Prostate gland (tissue), 2 donors: ENCODE measurements at regions of chr2 and their contacts with region 1.

Region 1: DNA sequence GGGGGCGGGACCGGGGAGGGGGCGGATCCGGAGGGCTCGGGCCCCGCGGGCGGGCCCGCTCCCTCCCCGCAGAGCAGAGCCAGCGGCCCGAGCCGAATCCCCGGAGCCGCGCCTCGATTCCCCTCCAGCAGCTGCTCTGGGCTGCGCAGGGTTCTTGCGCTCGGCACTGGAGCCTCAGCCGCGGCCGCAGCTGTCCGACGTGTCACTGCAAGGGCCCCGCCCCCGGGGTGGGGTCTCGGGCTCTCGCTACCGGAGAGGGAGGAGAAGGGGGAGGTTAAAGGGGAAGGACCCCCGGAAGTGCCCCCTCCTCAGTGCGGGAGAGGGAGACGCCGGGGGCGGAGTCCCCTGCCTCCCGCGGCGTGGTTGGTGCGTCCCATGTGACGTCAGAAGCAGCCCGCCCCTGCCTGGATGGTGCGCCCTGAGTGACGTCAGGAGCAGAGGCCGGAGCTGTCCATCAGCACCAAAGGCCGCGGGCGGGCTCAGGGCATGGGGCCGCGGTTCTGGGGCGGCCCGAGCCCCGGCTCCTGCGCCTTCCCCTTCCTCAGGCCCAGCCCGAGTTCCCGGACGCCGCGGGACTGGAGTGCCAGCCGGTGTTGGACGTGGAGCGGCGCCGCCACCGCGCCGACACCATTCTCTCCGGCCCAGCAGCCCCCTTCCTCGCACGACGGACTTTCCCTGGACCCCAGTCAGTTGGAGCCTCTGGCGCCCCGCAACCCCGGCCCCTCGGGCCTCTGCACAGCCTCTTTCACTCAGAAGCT is at the starts of genes CHPF and TMEM198:
- DNase-seq: peak; percentile 99
- H3K4me3 ChIP-seq: peak within 1 kb of the TSS; percentile 62 to 79
- H3K27ac ChIP-seq: peak within 1 kb of the TSS; percentile 93 to 94
- H3K4me1 ChIP-seq: peaks cover 11% of the 10 kb centered on the region
- H3K27me3 ChIP-seq: no peaks in the 10 kb centered on the region
- CTCF ChIP-seq: peak in 2 of 4 experiments; percentile 4 to 20
- POLR2A ChIP-seq: peak; percentile 73
- total RNA-seq, gene CHPF: 150 to 819 TPM
- total RNA-seq, gene TMEM198: 5.7 to 11.5 TPM

Region 2: DNA sequence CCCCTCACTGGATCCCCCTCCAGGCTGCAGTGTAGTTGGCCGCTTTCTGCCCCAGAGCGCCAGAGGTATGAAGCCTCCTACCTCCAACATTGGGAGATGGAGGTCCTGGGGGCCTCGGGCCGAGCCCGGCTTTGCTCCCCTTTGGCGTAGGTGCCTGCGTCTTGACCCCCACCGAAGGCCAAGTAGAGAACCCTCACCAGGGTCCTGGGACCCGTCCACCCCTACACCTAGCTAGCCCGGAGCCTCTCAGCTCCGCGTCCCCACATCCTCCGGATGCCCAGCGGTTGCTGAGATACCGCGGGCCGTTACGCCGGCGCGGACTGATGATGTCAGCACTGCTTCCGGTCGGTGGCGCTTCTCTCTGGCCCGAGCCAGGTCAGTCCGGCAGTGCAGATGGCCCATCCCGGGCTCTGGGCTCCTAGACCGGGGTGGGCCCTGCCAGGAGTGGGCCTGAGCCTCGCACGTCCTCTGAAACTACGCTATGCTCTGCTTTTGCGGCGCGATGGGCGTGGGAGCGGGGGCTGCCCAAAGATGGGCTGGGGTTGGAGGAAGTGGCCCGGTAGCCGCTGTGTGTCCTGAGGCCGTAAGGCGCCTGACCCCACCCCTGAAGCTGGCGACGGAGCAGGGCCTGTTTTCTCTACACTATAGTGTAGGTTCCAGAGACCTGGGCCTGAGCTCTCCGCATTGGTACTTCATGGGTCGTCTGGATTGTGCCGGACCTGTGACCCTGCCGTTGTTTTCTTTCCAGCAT is 298.5 kb before region 1 on chr2 and contains the starts of genes GLB1L and STK16:
- intact Hi-C with region 1: no loop called
- DNase-seq: peak; percentile 88
- H3K4me3 ChIP-seq: peak within 1 kb of the TSS; percentile 74 to 77
- H3K27ac ChIP-seq: peak within 1 kb of the TSS; percentile 90 to 94
- H3K4me1 ChIP-seq: peaks cover 20% of the 10 kb centered on the region
- H3K27me3 ChIP-seq: no peaks in the 10 kb centered on the region
- CTCF ChIP-seq: peak in 2 of 4 experiments; percentile 10 to 33
- POLR2A ChIP-seq: peak; percentile 78
- total RNA-seq, gene GLB1L: 23.1 to 25.0 TPM
- total RNA-seq, gene STK16: 20.5 to 26.1 TPM

Region 3: DNA sequence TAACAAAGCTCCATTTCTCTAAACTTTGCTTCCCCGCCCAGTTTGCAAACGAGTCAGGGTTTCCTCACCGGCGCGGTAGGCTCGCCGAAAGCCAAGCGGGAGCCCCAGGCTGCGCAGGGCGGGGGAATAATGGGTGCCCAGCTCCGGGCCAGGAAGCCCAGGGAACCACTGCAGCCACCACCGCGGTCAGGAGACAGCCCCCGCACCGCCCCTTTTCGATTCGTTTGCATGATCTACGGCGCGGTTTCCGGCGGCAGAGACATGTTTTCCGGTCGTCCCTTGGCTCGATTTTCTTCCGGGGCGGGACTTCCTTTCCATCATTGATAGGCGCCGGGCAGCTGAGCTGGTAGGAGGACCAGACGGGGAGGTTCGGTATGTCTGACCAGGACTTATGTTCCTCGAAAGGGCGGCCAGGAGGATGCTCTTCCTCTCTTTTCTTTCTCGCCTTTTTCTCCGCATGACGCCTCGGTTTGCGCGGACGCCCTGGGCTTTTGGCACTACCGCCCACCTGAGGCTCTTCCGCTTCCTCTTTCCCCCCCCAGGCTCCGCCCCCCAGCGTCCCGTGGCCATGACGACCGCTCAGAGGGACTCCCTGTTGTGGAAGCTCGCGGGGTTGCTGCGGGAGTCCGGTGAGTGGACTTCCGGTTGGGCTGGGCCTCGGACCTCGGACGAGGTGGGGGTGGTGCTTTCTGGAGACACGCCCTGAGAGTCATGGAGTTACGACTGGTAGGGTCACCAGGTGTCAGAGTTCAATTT is 54.0 kb after region 1 on chr2 and contains the start of gene STK11IP:
- intact Hi-C with region 1: loop called (anchors 5 kb)
- DNase-seq: peak; percentile 96
- H3K4me3 ChIP-seq: peak within 1 kb of the TSS; percentile 50 to 66
- H3K27ac ChIP-seq: peak within 1 kb of the TSS; percentile 82 to 90
- H3K4me1 ChIP-seq: no peaks in the 10 kb centered on the region
- H3K27me3 ChIP-seq: no peaks in the 10 kb centered on the region
- CTCF ChIP-seq: peak in 1 of 4 experiments; percentile 0
- POLR2A ChIP-seq: peak; percentile 77
- total RNA-seq, gene STK11IP: 18.3 to 60.3 TPM

Region 4: DNA sequence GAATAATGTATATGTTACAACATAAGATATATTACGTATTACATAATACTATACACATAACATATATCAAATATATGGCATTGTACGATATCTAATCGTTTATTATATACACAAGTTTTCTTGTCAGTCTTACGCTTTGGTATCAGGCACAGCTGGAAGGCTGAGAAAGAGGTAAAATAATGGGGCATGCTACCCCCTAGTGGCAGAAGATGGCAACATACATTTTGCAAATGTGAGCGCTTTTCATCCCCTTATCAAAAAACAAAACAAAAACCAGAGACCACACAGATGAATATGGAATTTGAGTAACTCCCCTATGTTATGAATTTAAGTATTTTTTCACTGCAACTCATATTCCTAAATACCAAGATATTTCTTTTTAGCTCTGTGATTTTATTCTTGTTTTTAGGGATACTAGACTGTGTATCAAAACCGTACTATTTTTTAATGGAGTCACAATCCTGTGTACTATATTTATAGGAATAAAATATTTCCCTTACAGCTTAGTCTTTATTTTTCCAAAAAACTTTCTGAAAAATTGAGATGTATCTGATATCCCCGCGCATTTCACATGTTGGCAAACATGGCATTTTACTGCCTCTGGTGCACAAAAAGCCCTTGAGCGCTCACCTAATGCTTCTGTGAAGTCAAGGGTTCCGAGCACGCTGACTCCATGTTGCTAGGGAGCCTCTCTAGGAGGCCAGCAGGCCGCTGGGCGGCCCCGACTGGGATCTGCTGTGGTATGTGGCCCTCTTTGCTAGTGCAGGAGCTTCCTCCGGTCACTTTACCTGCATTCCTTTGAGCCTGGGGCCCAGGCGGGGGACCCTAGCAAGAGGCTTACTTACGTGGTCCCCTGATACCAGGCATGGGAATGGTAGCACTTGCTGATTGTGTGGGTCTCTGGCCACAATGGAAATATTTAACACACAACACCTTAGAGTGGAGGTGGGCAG is 146.2 kb after region 1 on chr2:
- intact Hi-C with region 1: loop called (anchors 2 kb)
- DNase-seq: peak; percentile 44
- H3K4me3 ChIP-seq: no peak overlapping the region
- H3K27ac ChIP-seq: no peak overlapping the region
- H3K4me1 ChIP-seq: no peaks in the 10 kb centered on the region
- H3K27me3 ChIP-seq: no peaks in the 10 kb centered on the region
- CTCF ChIP-seq: peak; percentile 42 to 84 (median 80)
- POLR2A ChIP-seq: no peak

Region 5: GRCh38 chr2:220053919-220054318 is 510.1 kb after region 1 on chr2:
- intact Hi-C with region 1: no loop called
- DNase-seq: no peak
- H3K4me3 ChIP-seq: no peak overlapping the region
- H3K27ac ChIP-seq: no peak overlapping the region
- H3K4me1 ChIP-seq: no peaks in the 10 kb centered on the region
- H3K27me3 ChIP-seq: no peaks in the 10 kb centered on the region
- CTCF ChIP-seq: no peak
- POLR2A ChIP-seq: no peak